Right ventricle myocardium inferior (tissue), 1 donor: ENCODE measurements at regions of chr1 and their contacts with region 1.

Region 1: DNA sequence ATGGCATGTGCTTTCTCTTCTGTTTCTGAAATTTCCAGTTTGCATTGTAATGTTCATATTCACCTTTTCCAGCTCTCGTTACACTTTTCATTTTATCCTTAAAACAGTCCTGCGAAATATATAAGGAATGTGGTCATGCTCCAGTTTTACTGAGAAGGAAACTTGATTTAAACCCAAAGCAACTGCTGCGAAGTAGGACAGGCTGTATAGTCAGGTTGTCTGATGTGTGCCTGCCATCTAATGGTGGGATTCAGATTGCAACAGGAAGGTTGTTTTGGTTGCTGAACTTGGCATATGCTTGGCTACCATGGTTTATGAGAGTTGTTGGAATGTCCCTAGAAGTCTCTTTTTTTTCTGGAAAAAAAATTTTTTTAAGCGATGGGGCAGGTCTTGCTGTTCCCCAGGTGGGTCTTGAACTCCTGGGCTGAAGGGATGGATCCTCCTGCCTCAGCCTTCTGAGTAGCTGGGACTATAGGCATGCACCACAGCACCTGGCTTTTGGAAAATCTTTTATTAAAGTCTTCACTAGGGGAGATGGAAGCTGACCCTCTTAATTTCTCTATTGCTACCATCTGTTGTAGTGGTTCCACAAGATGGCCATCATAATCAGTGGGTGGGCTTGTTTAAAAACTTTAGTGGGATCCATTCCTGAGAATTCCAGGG is 86.9 kb downstream of the UCK2 start:
- DNase-seq: no peak
- ATAC-seq: peak; percentile 77

Region 2: GRCh38 chr1:165392634-165393571 is 521.4 kb before region 1 on chr1:
- intact Hi-C with region 1: loop called (anchors 5 kb)
- DNase-seq: peak; percentile 93
- ATAC-seq: peak; percentile 91

Region 3: GRCh38 chr1:165717918-165718515 is 196.2 kb before region 1 on chr1:
- intact Hi-C with region 1: loop called (anchors 2 kb)
- DNase-seq: no peak
- ATAC-seq: no peak

Region 4: DNA sequence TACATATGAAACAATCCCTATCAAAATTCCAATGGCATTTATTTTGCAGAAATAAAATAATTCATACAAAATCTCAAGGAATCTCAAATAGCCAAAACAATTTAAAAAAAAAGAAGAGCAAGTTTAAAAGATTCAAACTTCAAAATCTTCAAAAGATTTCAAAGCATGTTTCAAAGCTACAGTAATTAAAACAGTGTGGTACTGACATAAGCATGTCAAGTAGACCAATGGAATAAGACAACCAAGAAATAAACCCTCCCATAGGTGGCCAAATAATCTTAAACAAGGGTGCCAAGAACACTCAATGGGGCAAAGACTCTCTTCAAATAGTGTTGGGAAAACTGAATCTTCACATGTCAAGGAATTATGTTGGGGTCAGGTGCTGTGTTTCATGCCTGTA is 114.9 kb before region 1 on chr1:
- intact Hi-C with region 1: no loop called
- DNase-seq: no peak
- ATAC-seq: no peak

Region 5: DNA sequence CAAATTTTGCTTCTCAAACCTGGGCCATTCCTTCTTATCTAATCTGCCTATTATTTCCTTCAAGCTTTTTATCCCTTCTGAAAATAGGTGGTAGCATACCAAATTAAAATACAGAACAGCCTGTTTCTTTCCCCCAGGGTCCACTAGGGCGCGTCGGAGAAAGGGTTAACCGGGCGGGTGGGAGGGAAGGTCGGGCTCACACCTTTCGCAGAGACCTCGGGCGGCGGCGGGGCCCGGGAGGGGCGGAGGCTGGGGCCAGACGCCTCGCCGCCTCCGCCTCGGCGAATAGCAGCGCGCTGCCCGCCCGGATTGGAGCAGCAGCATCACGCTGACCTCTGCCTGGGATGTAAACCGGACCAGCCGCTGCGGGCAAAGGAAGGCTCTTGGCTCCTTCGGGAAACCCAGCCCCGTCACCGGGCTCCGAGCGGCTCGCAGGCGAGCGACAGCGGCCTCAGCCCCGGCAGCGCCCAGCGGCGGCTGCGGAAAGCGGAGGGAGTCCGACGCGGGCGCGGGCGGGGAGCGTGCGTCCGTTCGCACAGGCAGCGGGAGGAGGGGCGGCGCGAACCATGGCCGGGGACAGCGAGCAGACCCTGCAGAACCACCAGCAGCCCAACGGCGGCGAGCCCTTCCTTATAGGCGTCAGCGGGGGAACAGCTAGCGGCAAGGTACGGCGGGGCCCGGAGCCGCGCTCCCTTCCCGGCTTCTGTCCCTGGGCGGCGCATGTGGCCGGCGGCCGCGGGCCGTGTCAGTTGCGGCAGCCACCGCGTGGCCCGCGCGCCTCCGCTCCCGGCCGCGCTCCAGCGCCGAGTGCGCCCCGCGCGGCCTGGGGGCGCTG is 86.8 kb before region 1 on chr1 and contains the start of gene UCK2:
- intact Hi-C with region 1: loop called (anchors 5 kb)
- DNase-seq: peak; percentile 89
- ATAC-seq: peak; percentile 94
- total RNA-seq, gene UCK2: 8.4 TPM

Region 6: GRCh38 chr1:166040202-166040997 is 126.1 kb after region 1 on chr1:
- intact Hi-C with region 1: no loop called
- DNase-seq: no peak
- ATAC-seq: no peak